ENCODE measurements at regions of chr2 and their contacts with region 1.

Region 1: DNA sequence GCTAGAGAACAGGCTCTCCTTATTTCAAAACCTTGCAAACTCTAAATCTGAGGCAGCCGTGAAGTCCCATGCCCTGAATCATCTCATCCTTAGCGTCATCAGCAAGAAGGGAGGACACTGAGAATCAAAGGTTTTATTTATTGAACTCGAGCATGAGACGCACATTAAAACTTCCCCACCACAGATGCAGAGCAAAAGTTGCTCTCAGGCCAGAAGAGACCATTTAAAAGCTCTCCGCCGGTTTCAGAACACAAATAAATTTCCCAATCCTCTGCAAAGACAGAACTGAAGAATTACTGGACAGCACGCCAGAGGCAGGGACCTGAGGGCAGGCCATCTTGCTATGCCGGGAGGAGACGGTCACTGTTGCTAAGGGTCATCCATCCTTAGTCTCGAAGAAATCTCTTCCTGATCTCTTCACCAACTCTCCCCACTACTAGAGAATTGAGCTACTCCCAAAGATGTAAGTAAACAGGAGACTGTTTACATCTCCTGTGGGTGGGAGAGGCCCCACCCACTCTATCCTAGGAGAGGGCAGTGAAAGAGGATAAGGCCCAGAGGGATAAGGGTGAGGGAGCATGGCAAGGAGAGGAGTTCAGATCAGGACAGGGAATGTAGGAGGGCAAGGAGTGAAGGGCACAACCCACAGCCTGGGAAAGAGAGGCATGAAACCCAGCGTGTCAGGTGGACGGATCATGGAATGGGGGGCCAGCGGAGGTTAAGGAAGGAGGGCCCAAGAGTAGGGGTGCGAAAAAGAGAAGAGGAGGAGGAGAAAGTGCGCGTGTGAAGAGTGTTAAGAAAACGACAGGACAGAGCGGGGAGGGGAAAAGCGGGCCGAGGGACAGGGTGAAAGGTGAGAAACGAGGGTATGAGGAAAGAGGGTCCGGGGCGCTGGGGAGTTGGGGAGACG is 1.1 kb downstream of the AMMECR1L start:
- DNase-seq: no peak
- ATAC-seq: no peak
- H3K4me3 Mint-ChIP-seq: peak overlapping the region; percentile 88
- H3K27ac Mint-ChIP-seq: peak overlapping the region; percentile 83
- H3K4me1 Mint-ChIP-seq: peaks cover 34% of the 10 kb centered on the region
- H3K27me3 Mint-ChIP-seq: no peaks in the 10 kb centered on the region
- CTCF ChIP-seq: no peak

Region 2: GRCh38 chr2:127897531-127898211 is 13.0 kb after region 1 on chr2:
- CTCF ChIA-PET with region 1: interaction called, 3 read pairs
- POLR2A ChIA-PET with region 1: interaction called, 3 read pairs
- intact Hi-C with region 1: loop called (anchors 1 kb)
- DNase-seq: no peak
- ATAC-seq: no peak
- H3K4me3 Mint-ChIP-seq: peak overlapping the region; percentile 47
- H3K27ac Mint-ChIP-seq: peak overlapping the region; percentile 12
- H3K4me1 Mint-ChIP-seq: peaks cover 27% of the 10 kb centered on the region
- H3K27me3 Mint-ChIP-seq: no peaks in the 10 kb centered on the region
- CTCF ChIP-seq: no peak

Measured in activated B cell treated with CpG ODN at 0.5 μM for 24 hours (primary cell).